ENCODE measurements at regions of chr9 and their contacts with region 1.

Region 1: GRCh38 chr9:132901856-132902831 is 23.4 kb downstream of the SPACA9 start:
- DNase-seq: peak; percentile 85
- H3K4me3 ChIP-seq: no peak overlapping the region
- H3K27ac ChIP-seq: no peak overlapping the region
- H3K4me1 ChIP-seq: no peaks in the 10 kb centered on the region
- H3K27me3 ChIP-seq: no peaks in the 10 kb centered on the region
- CTCF ChIP-seq: peak; percentile 84 to 97
- POLR2A ChIP-seq: no peak

Region 2: DNA sequence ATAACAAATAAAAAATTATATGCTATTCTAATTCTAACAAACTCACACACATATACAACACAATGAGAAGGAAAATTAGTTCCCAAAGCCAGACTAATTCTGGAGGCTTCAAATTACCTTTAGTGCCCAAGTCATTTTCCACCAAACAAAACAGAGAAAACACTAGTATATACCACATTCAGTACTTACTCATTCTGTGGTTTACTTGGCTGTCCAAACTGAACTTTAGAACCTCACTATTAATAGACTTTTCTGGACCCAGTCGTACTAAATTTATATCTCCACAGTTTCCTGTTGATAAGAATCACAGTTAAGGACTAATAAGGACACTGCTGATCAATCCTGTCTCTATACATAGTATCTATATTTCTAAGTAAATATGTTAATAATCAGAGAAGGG is 613.8 kb before region 1 on chr9:
- CTCF ChIA-PET with region 1: no interaction called
- POLR2A ChIA-PET with region 1: no interaction called
- dilution Hi-C with region 1: no loop called
- intact Hi-C with region 1: no loop called
- DNase-seq: no peak
- H3K4me3 ChIP-seq: no peak overlapping the region
- H3K27ac ChIP-seq: no peak overlapping the region
- H3K4me1 ChIP-seq: no peaks in the 10 kb centered on the region
- H3K27me3 ChIP-seq: no peaks in the 10 kb centered on the region
- CTCF ChIP-seq: no peak
- POLR2A ChIP-seq: no peak

Region 3: DNA sequence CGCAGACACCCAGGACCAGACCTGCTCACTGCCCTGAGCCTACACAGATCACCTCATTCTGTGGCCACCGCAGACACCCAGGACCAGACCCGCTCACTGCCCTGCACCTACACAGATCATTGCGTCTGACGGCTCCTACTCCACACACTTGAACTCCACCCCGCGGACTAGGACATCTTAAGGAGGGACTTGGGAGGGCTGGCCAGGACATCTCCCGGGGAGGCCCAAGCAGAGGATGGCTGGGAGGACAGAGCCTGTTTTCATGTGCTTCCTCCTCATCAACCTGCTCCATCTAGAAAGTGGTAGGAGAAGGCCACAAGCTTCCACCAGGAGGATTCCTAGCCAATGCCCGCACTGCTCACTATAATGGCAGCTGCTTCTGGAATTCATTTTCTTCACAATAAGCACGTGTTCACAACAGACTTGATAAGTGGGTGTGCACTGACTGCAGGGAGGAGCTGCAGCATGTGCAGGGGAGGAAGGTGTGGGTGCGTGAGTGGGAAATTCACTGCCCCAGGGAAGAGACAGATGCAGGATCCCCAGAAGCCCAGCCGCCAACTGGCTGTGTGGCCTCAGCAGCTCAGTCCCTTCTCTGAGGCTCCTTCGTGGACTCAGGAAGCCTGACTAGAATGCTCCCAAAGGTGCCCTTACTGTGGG is 88.9 kb before region 1 on chr9:
- CTCF ChIA-PET with region 1: interaction called, 15 read pairs
- POLR2A ChIA-PET with region 1: no interaction called
- dilution Hi-C with region 1: no loop called
- intact Hi-C with region 1: no loop called
- DNase-seq: no peak
- H3K4me3 ChIP-seq: no peak overlapping the region
- H3K27ac ChIP-seq: no peak overlapping the region
- H3K4me1 ChIP-seq: no peaks in the 10 kb centered on the region
- H3K27me3 ChIP-seq: peaks cover 13 to 20% of the 10 kb centered on the region in 2 experiments
- CTCF ChIP-seq: no peak
- POLR2A ChIP-seq: no peak

Region 4: DNA sequence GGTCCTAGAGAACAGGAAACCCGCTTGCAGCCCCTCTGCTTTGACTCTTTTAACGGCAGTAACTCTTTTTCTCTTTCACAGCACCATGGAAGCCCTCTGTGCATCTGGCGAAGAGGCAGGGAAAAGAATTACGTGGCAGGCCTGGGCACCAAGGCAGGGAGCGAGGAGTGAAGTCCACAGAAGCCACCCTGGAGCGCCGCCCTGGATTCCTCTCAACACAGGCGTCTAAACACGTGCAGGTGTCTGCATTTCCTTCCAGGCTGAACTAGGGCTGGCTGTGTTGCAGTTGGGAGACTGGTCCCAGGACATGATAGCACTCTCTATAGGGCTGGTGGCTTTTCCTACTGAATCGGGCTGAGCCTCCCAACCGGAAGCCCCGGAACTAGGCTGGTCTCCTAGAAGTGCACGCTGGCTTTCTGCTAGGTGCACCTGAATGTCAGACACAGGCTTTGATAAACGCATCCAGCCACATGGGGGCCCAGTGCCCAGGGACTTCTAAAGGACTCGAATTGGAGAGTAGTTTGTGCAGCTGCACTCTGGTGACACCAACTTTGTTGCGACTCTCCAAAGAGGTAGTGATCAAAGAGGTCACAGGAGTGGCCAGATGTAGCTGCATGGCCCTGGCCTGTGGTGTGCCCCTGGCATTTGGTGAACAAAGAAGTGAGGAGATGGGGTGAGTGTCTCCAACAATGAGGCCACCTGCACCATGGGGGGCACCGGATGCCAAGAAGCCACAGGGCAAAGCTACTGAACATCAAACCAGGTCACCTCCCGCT is 78.6 kb before region 1 on chr9:
- CTCF ChIA-PET with region 1: no interaction called
- POLR2A ChIA-PET with region 1: no interaction called
- dilution Hi-C with region 1: no loop called
- intact Hi-C with region 1: no loop called
- DNase-seq: no peak
- H3K4me3 ChIP-seq: no peak overlapping the region
- H3K27ac ChIP-seq: no peak overlapping the region
- H3K4me1 ChIP-seq: no peaks in the 10 kb centered on the region
- H3K27me3 ChIP-seq: peaks cover 1 to 7% of the 10 kb centered on the region in 2 experiments
- CTCF ChIP-seq: no peak
- POLR2A ChIP-seq: no peak

Region 5: DNA sequence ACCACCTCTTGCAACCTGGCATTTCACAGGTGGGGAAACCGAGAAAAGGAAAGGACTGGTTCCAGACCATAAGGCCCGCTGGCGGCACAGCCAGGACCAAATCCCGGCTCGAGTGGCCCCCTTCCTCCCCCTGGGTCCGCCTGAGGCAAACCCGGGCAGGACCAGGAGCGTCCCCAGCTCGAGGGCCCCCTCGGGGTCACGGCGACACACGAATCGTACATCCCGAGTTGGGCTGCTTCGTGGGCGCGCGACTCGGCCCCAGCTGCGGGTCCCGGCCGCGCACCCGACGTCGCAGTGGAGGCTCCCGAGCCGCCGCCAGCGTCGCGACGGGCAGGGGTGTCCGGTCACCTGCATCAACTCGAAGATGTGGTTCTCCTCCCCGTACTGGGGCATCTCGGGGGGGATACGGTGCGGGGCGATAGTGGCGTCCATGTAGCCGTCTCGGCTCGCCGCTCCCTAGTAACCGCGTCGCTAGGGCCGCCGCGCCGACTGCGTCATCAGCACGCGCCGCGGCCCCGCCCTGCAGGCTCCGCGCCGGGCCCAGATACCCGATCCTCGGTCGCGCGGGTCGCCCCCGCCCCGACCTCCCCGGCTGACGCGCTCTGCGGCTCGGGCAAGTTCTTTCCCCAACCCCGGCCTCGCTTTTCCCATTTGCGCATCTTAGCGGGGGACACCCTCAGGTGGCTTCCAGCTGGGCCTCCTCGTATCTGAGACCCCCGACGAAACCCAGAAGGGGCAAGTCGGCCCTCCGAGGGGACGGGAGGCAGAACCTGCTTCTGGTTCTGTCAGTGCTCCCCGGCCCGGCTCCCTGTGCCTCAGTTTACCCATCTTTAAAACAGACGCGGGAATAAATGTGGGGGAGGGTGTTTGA is 24.1 kb before region 1 on chr9 and contains the start of gene AK8:
- CTCF ChIA-PET with region 1: interaction called, 12 read pairs
- POLR2A ChIA-PET with region 1: no interaction called
- dilution Hi-C with region 1: no loop called
- intact Hi-C with region 1: no loop called
- DNase-seq: peak; percentile 67
- H3K4me3 ChIP-seq: peak within 1 kb of the TSS; percentile 80 to 99 (median 96)
- H3K27ac ChIP-seq: peak within 1 kb of the TSS; percentile 74
- H3K4me1 ChIP-seq: peaks cover 2% of the 10 kb centered on the region
- H3K27me3 ChIP-seq: peaks cover 0 to 3% of the 10 kb centered on the region in 2 experiments
- CTCF ChIP-seq: no peak
- POLR2A ChIP-seq: no peak
- total RNA-seq, gene AK8: 0.32 TPM in 1 of 2 replicates, not detected in the other

Region 6: DNA sequence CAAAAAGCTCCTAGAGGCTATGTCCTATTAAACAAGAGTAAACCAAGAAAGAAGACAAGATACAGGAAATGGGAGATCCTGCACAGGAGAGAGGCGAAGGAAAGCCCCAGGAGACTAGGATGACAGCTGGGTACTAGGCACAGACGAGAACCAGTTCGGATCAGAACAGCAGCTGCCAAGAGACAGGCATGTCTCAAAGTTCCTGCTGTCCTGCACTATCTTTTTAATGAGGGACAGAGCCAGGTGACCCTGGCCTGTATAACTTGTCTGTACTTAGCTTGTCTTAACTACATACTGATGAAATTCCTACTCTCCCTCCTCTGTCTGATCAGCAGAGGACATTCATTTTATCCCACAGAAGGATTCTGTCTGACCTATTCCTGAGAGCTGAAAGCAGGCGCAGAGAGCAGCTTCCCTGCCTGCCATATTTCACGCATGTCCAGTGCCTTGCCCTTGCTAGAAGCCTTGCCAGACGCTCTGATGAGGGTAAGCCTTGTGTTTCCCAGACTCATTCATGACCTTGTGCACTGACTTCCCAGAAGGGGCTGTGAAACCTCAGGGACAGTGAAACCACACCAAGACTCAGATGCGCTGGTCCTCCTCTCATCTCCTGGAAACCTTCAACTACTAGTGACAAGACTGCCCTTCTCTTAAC is 17.6 kb after region 1 on chr9:
- CTCF ChIA-PET with region 1: interaction called, 45 read pairs
- POLR2A ChIA-PET with region 1: no interaction called
- dilution Hi-C with region 1: no loop called
- intact Hi-C with region 1: no loop called
- DNase-seq: no peak
- H3K4me3 ChIP-seq: no peak overlapping the region
- H3K27ac ChIP-seq: no peak overlapping the region
- H3K4me1 ChIP-seq: no peaks in the 10 kb centered on the region
- H3K27me3 ChIP-seq: no peaks in the 10 kb centered on the region
- CTCF ChIP-seq: no peak
- POLR2A ChIP-seq: no peak

Region 7: GRCh38 chr9:132973713-132974112 is 71.6 kb after region 1 on chr9:
- CTCF ChIA-PET with region 1: interaction called, 4 read pairs
- POLR2A ChIA-PET with region 1: no interaction called
- dilution Hi-C with region 1: no loop called
- intact Hi-C with region 1: loop called (anchors 1 kb)
- DNase-seq: no peak
- H3K4me3 ChIP-seq: no peak overlapping the region
- H3K27ac ChIP-seq: no peak overlapping the region
- H3K4me1 ChIP-seq: no peaks in the 10 kb centered on the region
- H3K27me3 ChIP-seq: peaks cover 9 to 12% of the 10 kb centered on the region in 2 experiments
- CTCF ChIP-seq: no peak
- POLR2A ChIP-seq: no peak